Activated T-helper 1 cell treated with anti-CD3 and anti-CD28 coated beads, Interleukin-12 subunit alpha, Interleukin-12 subunit beta, Interleukin-2, Interleukin-4 antibody, amounts not matched to agents 30 ng/mL and 10 ng/mL and 1 ng/mL, durations not matched to agents 14 hours and 24 hours and 36 hours (primary cell): ENCODE measurements at regions of chr17 and their contacts with region 1.

Region 1: GRCh38 chr17:2087597-2088211 is 32.8 kb downstream of the HIC1 start:
- DNase-seq: peak; percentile 54
- H3K4me3 Mint-ChIP-seq: peak overlapping the region; percentile 66
- H3K27ac Mint-ChIP-seq: peak overlapping the region; percentile 86
- H3K4me1 Mint-ChIP-seq: peaks cover 93% of the 10 kb centered on the region
- H3K27me3 Mint-ChIP-seq: peaks cover 1% of the 10 kb centered on the region

Region 2: DNA sequence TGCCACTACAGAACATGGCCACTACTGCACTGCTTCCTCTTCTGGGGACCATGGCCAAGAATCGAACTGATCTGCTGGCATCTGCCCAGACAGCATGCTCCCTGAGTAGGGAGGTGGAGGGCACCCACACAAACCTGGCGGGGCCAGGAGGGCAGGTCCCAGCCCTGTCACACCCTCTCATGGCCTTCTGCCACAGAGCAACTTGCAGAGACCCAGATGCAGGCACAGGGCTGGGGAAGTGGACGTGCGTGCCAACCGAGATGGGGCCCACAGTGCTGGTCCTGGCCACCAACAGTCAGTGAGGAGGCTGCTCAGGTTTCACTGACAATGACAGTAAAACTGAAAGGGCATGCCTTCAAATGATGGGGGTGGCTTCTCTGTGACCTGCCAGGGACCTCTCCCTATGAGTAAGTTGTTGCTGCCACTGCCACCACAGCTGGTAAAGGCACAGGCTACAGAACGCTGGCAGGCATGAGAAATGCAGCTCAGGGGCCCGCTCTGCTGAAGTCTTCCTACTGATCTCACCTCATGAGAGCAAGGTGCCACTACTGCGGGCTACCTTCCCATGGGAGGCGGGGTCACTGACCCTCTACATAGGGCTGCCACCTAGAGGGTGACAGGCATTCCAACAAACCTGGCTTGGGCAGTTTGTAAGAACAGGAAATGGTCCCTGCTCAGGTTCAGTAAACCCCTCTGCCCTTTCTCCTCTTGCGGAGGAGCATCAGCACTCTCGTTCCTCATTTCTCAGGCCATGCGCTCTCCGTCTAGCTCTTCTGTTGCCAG is 17.3 kb before region 1 on chr17:
- intact Hi-C with region 1: loop called (anchors 1 kb)
- DNase-seq: peak; percentile 68
- H3K4me3 Mint-ChIP-seq: peak overlapping the region; percentile 58
- H3K27ac Mint-ChIP-seq: peak overlapping the region; percentile 92
- H3K4me1 Mint-ChIP-seq: peaks cover 58% of the 10 kb centered on the region
- H3K27me3 Mint-ChIP-seq: no peaks in the 10 kb centered on the region

Region 3: DNA sequence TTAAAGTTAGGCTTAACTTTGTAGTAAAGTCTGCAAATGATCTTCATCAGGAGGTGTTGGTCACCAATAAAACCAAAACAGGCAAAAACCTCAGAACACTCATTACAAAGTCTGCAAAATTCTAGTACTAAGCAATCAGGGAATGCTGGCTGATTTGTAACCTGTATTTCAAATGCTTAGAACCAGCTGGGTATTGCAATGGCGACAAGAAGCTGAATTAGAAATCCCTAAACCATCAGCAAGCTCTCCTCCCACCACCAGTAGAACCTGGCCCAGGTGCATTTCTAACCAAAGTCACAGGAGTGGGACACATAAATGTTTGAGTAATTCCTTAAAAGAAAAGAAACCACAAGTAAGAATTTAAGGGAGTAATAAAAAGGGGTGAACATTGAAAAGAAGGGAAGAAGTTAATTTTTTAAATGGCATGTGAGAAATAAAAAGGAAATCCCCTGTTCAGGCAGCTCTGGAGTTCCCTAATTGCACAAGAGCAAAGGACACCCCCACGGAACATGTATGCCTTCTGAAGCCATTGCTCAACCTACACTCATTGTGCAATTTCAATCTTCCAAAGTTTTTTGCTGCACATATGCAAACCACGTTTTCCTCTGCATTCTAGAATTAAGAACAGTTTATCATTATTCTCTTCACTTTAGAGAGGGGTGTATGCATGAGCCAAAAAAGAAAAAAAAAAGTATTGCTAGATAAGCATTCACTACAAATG is 70.1 kb after region 1 on chr17:
- intact Hi-C with region 1: loop called (anchors 5 kb)
- DNase-seq: no peak
- H3K4me3 Mint-ChIP-seq: no peak overlapping the region
- H3K27ac Mint-ChIP-seq: peak overlapping the region; percentile 56
- H3K4me1 Mint-ChIP-seq: peaks cover 25% of the 10 kb centered on the region
- H3K27me3 Mint-ChIP-seq: no peaks in the 10 kb centered on the region

Region 4: GRCh38 chr17:2195729-2196128 is 108.0 kb after region 1 on chr17:
- intact Hi-C with region 1: loop called (anchors 1 kb)
- DNase-seq: peak; percentile 16
- H3K4me3 Mint-ChIP-seq: peak overlapping the region; percentile 1
- H3K27ac Mint-ChIP-seq: peak overlapping the region; percentile 70
- H3K4me1 Mint-ChIP-seq: peaks cover 47% of the 10 kb centered on the region
- H3K27me3 Mint-ChIP-seq: no peaks in the 10 kb centered on the region

Region 5: GRCh38 chr17:2222901-2223616 is 135.4 kb after region 1 on chr17:
- intact Hi-C with region 1: loop called (anchors 1 kb)
- DNase-seq: peak; percentile 78
- H3K4me3 Mint-ChIP-seq: peak overlapping the region; percentile 65
- H3K27ac Mint-ChIP-seq: peak overlapping the region; percentile 84
- H3K4me1 Mint-ChIP-seq: peaks cover 60% of the 10 kb centered on the region
- H3K27me3 Mint-ChIP-seq: no peaks in the 10 kb centered on the region

Region 6: DNA sequence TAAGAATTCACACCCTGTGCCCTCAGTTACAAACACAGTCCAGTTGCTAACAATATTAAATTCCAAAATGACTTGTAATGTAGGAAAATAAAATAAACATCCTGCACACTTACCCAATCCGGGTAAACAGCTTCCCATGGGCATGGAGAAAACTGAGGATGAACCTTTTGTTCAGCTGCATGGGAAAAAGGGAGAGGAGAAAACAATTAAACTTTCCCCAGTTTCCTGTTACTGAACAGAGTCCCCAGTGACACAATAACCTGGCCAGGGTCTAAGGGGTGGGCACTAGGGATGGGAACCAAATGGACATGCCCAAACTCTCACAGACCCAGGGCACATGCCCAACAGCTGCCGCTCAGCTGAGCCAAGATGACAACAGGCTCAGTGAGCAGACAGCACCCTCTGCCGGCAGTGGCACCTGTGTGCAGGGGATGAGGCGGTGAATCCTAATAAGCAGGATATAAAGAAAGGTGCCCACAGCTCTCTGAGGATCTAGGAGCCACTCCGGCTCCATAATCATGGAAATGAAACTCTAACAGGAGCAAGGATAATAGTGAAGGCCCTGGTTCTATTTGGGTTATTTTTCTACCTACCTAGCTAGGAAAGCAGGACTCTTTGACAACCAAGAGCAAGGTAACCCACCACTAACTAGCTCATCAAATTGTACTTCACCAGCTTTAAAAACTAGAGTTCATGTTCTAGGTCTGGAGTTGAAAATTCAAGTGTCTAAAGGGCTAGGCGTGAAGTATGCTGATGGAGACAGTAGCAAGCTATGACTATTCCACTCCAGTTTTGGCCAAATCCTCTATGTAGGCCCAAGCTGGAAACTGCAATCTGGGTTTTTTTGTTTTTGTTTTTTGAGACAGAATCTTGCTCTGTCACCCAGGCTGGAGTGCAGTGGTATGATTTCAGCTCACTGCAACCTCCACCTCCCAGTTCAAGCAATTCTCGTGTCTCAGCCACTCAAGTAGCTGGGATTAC is 157.1 kb after region 1 on chr17:
- intact Hi-C with region 1: loop called (anchors 1 kb)
- DNase-seq: peak; percentile 75
- H3K4me3 Mint-ChIP-seq: no peak overlapping the region
- H3K27ac Mint-ChIP-seq: peak overlapping the region; percentile 76
- H3K4me1 Mint-ChIP-seq: peaks cover 70% of the 10 kb centered on the region
- H3K27me3 Mint-ChIP-seq: no peaks in the 10 kb centered on the region

Region 7: GRCh38 chr17:2266045-2266864 is 178.6 kb after region 1 on chr17:
- intact Hi-C with region 1: loop called (anchors 1 kb)
- DNase-seq: peak; percentile 88
- H3K4me3 Mint-ChIP-seq: peak overlapping the region; percentile 74
- H3K27ac Mint-ChIP-seq: peak overlapping the region; percentile 100
- H3K4me1 Mint-ChIP-seq: peaks cover 82% of the 10 kb centered on the region
- H3K27me3 Mint-ChIP-seq: no peaks in the 10 kb centered on the region